RWPE1 (cell line): ENCODE measurements at regions of chr2 and their contacts with region 1.

Region 1: DNA sequence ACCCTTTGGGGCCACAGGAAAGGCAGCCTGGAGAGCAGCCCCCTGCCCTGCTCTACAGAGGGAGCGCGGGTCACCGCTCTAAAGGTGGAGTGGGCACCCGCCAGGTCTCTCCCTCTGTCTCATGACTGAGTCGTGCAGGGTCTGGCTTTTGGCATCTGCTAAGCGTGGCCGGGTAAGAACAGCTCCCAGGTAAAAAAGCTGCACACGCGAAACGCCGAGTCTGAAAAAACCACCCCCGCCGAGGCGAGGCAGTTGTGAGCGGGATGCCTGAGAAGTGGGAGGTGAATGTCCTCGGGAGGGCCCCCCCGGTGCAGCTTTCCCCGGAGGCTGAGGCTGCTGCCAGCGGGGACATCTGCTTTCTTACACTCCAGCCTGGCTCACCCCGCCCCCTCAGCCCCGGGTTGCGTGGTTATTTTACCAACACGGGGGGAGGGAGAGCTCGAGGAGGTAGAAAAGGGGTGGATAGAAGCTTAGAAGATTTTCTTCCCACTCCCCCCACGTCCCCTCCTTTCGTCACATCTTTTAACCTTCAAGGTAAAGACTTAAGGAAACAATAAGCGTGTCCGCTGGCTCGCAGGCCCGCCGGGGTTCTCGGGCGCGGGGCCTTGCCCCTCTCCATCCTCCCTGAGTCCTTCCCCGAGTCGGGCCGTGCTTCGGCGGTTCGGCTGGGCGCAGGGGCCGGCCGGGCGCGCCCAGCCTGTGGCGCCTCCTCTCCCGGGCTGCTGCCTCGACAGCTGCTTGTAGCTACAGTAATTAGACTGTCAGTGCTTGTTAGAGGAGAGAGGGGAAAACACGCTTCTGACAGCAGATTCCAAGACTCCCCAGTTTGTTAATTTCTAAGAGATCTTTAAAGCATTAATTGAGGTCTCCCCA is 70.6 kb upstream of the PSMD14 start:
- DNase-seq: peak; percentile 15
- H3K27ac ChIP-seq: peak overlapping the region; percentile 49; the same call in 1 of the 2 replicates
- CTCF ChIP-seq: no peak

Region 2: GRCh38 chr2:161147856-161148569 is 89.6 kb before region 1 on chr2:
- CTCF ChIA-PET with region 1: no interaction called
- POLR2A ChIA-PET with region 1: interaction called, 10 read pairs
- DNase-seq: no peak
- H3K27ac ChIP-seq: no peak overlapping the region
- CTCF ChIP-seq: no peak

Region 3: DNA sequence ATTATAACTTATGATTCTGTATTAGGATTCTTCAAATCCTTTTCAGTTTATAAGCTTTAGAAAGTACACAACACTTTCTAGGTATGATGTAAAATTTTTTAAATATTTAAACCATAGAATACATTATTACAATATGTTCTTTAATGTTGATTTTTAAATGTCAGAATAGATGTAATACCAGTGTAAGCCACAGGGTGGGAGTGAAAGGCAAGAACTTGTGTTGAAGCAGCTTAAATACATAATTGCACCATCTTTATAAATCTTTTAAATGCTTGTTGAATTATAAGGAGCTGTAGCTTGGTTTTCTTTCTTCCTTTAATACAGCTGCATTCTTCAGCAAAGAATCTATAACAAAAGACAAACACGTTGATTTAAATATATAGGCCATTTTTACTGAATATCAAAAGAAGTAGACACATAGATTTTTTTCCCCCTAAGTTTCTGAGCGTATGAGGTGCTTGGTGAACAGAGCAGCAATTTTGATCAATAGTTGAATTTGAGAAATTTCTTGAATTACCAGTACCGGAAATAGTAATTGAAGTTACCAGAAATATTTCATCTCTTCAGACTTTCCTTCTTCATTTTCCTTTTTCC is 14.4 kb before region 1 on chr2:
- CTCF ChIA-PET with region 1: interaction called, 11 read pairs
- POLR2A ChIA-PET with region 1: no interaction called
- DNase-seq: peak; percentile 14
- H3K27ac ChIP-seq: no peak overlapping the region
- CTCF ChIP-seq: peak; percentile 71